WTC11 (cell line): ENCODE measurements at regions of chr4 and their contacts with region 1.

Region 1: DNA sequence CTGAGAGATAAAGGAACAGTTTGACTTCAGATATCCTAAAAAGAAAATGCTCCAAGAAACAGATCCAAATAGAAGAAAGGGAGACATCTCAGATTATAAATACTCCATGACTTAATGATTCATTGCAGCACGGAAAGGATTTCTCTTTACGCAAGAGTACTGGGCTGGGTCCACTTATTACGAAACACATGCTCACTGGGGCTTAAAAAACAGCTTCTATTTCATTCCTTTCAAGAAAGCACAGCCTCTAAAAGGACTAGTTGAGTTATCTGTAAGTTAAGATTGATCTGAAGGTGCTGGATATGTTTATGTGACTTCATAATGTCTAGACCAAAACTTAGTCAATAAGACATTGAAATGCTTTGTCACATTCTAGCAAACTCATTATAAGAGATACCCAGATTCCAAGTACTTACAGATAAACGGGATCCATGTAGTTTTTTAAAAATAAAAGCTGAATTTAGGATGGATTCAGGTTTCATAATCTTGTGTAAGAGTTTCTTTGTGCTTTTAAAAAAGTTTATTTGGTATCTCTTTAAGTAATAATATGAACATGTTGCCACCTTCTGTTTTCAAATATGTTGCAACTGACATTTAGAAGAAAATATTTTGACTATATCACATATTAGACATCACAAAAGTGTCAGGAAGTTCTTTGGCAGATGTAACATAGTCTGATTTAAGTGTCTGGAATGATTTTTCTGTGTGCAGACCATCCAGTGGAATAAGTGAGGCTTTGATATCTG is 109.5 kb upstream of the MYOZ2 start:
- DNase-seq: no peak
- ATAC-seq: no peak
- H3K4me3 Mint-ChIP-seq: no peak overlapping the region
- H3K27ac Mint-ChIP-seq: no peak overlapping the region
- H3K4me1 Mint-ChIP-seq: peaks cover 38% of the 10 kb centered on the region
- H3K27me3 Mint-ChIP-seq: no peaks in the 10 kb centered on the region
- CTCF ChIP-seq: no peak

Region 2: GRCh38 chr4:119040694-119041185 is 14.7 kb after region 1 on chr4:
- CTCF ChIA-PET with region 1: interaction called, 10 read pairs
- POLR2A ChIA-PET with region 1: no interaction called
- DNase-seq: peak; percentile 32
- ATAC-seq: peak; percentile 87
- H3K4me3 Mint-ChIP-seq: no peak overlapping the region
- H3K27ac Mint-ChIP-seq: peak overlapping the region; percentile 87; the same call in 1 of the 2 replicates
- H3K4me1 Mint-ChIP-seq: peaks cover 51% of the 10 kb centered on the region
- H3K27me3 Mint-ChIP-seq: no peaks in the 10 kb centered on the region
- CTCF ChIP-seq: no peak